ENCODE measurements at regions of chr1 and their contacts with region 1.

Region 1: GRCh38 chr1:155261852-155262673 is at the start of gene SCAMP3:
- DNase-seq: peak; percentile 99
- ATAC-seq: peak; percentile 95
- H3K4me3 ChIP-seq: peak within 1 kb of the TSS; percentile 65
- H3K27ac ChIP-seq: peak within 1 kb of the TSS; percentile 70
- H3K4me1 ChIP-seq: peaks cover 2% of the 10 kb centered on the region
- H3K27me3 ChIP-seq: no peaks in the 10 kb centered on the region
- CTCF ChIP-seq: no peak
- POLR2A ChIP-seq: peak; percentile 82; the same call in 1 of the 2 replicates
- RAD21 ChIP-seq: no peak
- total RNA-seq, gene SCAMP3: 29.2 and 30.5 TPM in 2 replicates

Region 2: GRCh38 chr1:154931940-154932487 is 330.0 kb before region 1 on chr1:
- CTCF ChIA-PET with region 1: no interaction called
- POLR2A ChIA-PET with region 1: no interaction called
- dilution Hi-C with region 1: no loop called
- in situ Hi-C with region 1: no loop called
- intact Hi-C with region 1: no loop called
- DNase-seq: no peak
- ATAC-seq: no peak
- H3K4me3 ChIP-seq: no peak overlapping the region
- H3K27ac ChIP-seq: no peak overlapping the region
- H3K4me1 ChIP-seq: no peaks in the 10 kb centered on the region; the same call in 1 of the 2 replicates
- H3K27me3 ChIP-seq: no peaks in the 10 kb centered on the region
- CTCF ChIP-seq: no peak
- POLR2A ChIP-seq: no peak
- RAD21 ChIP-seq: no peak

Region 3: DNA sequence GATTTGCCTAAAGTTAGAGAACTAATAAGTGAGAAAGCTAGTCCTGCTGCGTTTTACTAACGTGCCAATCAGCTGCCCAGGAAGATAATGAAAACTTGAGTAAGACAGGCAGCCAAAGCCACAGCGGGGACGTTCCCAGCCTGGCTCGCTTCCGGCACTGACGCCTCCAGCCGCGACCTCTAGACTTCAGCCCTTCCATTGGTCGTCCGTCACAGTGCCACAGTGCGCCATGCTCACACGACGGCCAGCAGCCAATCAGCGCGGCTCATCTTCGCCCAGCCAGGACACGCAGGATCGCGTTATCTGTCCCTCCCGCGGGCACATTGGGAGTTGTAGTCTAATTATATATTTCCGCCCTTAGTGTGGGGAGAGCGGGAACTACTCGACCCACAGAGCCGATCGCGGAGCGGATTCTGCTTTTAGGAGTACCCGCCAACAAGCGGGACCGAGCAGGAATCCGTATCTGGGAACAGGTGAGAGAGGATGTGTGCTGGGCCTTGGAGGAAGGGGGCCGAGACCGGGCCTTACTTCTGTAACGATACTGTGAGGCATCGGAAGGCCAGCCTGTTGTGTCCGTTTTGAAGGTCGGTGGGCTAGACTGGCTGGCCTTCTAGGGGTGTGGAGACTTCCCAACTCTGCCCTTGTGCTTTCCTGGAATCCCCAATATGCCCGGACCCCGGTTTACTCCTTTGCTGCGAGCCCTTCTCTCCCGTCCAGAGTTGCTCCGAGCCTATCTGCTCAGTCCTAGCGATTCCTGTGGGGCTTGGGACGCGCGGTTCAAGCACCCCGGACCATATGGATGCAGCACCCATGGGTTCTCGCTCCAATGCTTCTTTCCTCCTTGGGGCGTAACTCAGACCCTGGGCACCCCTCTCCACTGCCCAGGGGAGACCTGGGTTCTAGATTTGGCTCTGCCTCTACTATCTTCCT is 46.7 kb after region 1 on chr1 and contains the start of gene FDPS:
- CTCF ChIA-PET with region 1: no interaction called
- POLR2A ChIA-PET with region 1: no interaction called
- dilution Hi-C with region 1: no loop called
- in situ Hi-C with region 1: no loop called
- intact Hi-C with region 1: loop called (anchors 5 kb)
- DNase-seq: peak; percentile 99
- ATAC-seq: peak; percentile 99
- H3K4me3 ChIP-seq: peak within 1 kb of the TSS; percentile 62
- H3K27ac ChIP-seq: peak within 1 kb of the TSS; percentile 72
- H3K4me1 ChIP-seq: peaks cover 4% of the 10 kb centered on the region
- H3K27me3 ChIP-seq: no peaks in the 10 kb centered on the region
- CTCF ChIP-seq: no peak
- POLR2A ChIP-seq: peak; percentile 84
- RAD21 ChIP-seq: no peak
- total RNA-seq, gene FDPS: 176 and 191 TPM in 2 replicates

Region 4: DNA sequence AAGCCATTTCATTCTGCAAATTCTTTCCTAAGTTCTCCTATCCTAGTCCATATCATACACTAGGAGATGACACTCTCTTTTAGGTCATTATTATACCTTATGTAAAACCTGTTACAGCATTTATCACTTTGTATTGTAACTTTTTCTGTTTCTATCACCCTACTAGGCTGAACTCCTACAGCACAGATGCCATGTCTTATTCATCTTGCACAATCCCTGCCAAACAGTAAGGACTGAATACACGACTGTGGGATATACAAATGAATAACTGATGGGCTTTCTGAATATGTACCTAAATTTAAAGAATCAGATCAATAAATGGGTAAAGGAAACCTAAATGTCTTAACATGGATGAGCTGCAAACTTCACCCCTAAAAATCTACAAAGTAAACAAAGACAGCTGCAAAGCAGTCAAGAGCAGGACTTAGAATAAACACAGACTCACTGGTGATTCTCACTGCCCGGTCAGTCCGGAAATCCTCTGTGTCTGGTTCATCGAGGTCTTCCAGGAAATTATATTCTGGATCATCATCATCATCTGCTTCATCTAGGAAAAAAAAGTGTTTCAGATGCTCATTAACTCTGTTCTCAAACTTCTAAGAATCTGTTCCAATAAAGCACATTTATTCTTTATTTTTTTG is 532.7 kb after region 1 on chr1:
- CTCF ChIA-PET with region 1: no interaction called
- POLR2A ChIA-PET with region 1: no interaction called
- dilution Hi-C with region 1: no loop called
- in situ Hi-C with region 1: no loop called
- intact Hi-C with region 1: no loop called
- DNase-seq: peak; percentile 76
- ATAC-seq: peak; percentile 96
- H3K4me3 ChIP-seq: no peak overlapping the region
- H3K27ac ChIP-seq: peak overlapping the region; percentile 53; the same call in 1 of the 2 replicates
- H3K4me1 ChIP-seq: peaks cover 5% of the 10 kb centered on the region
- H3K27me3 ChIP-seq: no peaks in the 10 kb centered on the region
- CTCF ChIP-seq: no peak
- POLR2A ChIP-seq: no peak
- RAD21 ChIP-seq: 0 out of 2 replicates have a peak, but pooled peaks have one; percentile 7

Region 5: GRCh38 chr1:155978325-155978972 is 716.4 kb after region 1 on chr1 and contains the start of gene ARHGEF2:
- CTCF ChIA-PET with region 1: no interaction called
- POLR2A ChIA-PET with region 1: no interaction called
- dilution Hi-C with region 1: no loop called
- in situ Hi-C with region 1: no loop called
- intact Hi-C with region 1: no loop called
- DNase-seq: peak; percentile 64
- ATAC-seq: peak; percentile 45
- H3K4me3 ChIP-seq: peak within 1 kb of the TSS; percentile 94
- H3K27ac ChIP-seq: peak within 1 kb of the TSS; percentile 99
- H3K4me1 ChIP-seq: peaks cover 51% of the 10 kb centered on the region
- H3K27me3 ChIP-seq: no peaks in the 10 kb centered on the region
- CTCF ChIP-seq: peak; percentile 30
- POLR2A ChIP-seq: peak; percentile 53; the same call in 1 of the 2 replicates
- RAD21 ChIP-seq: no peak; the same call in 1 of the 2 replicates
- total RNA-seq, gene ARHGEF2: 81.4 and 91.8 TPM in 2 replicates